Tibial artery (tissue), 4 donors: ENCODE measurements at regions of chr18 and their contacts with region 1.

Region 1: DNA sequence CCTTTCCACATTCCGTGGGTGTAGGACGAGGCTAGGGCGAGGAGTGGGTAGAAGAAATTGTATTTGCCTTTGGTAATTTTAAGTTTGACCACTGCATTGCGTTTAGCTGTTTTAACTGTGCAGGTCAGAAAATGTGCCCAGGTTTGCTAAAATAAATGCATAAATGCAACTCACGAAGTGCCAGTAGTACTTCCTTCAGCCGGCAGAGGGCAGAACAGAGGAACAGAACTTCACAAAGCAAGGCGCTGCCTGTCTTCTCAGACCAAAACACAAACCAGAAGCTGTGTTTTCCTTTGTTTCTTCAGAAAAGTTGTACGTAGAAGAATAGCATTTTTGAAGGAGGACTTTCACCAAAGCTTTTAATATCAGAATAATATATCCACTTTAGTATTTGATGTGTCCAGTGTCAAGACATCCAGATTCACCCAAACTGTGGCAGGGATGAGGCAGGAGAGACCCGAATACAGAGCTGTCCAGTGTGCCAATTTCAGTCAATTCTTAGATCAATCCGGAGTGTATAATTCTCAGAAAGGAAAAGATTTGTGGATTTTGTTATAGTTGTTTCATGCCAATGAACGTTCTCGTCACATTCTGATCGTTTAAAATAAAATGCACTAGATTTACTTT is 348.6 kb downstream of the DLGAP1 start:
- DNase-seq: peak; percentile 79 to 82
- H3K4me3 ChIP-seq: peak overlapping the region; percentile 34 to 44
- H3K27ac ChIP-seq: peak overlapping the region in 1 of 2 donors; percentile 2
- H3K4me1 ChIP-seq: peaks cover 0 to 3% (median 0%) of the 10 kb centered on the region in 4 donors
- H3K27me3 ChIP-seq: no peaks in the 10 kb centered on the region
- CTCF ChIP-seq: peak; percentile 78 to 90

Region 2: GRCh38 chr18:3995476-3996102 is 110.9 kb before region 1 on chr18:
- intact Hi-C with region 1: no loop called
- DNase-seq: peak in 1 of 2 donors; percentile 34
- H3K4me3 ChIP-seq: peak overlapping the region in 1 of 2 donors; percentile 11
- H3K27ac ChIP-seq: no peak overlapping the region
- H3K4me1 ChIP-seq: peaks cover 0 to 3% (median 1%) of the 10 kb centered on the region in 4 donors
- H3K27me3 ChIP-seq: no peaks in the 10 kb centered on the region
- CTCF ChIP-seq: peak; percentile 58 to 84

Region 3: DNA sequence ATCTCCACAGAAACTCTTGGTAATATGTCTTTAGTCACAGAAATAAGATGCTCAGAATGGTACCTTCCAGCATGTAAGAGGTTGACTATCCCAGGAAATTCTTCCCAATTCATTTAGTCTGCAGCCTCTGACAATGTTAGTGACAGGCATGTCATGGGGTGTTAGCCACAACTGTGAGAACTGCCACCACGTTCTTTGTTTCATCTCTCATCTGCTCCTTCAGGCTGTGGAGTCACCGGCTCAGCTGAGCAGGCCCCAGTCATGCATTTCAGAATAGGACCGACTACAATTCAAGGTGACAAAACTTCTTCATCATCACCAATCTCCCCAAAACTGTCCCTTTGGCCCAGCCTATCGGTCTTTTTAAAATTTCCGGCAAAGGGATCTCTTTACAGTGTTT is 923.1 kb after region 1 on chr18:
- intact Hi-C with region 1: loop called (anchors 10 kb)
- DNase-seq: no peak
- H3K4me3 ChIP-seq: no peak overlapping the region
- H3K27ac ChIP-seq: no peak overlapping the region
- H3K4me1 ChIP-seq: no peaks in the 10 kb centered on the region
- H3K27me3 ChIP-seq: no peaks in the 10 kb centered on the region
- CTCF ChIP-seq: no peak

Region 4: GRCh38 chr18:5066380-5066977 is 960.0 kb after region 1 on chr18:
- intact Hi-C with region 1: loop called (anchors 10 kb)
- DNase-seq: no peak
- H3K4me3 ChIP-seq: no peak overlapping the region
- H3K27ac ChIP-seq: no peak overlapping the region
- H3K4me1 ChIP-seq: no peaks in the 10 kb centered on the region
- H3K27me3 ChIP-seq: no peaks in the 10 kb centered on the region
- CTCF ChIP-seq: no peak